CD8-positive, alpha-beta T cell (primary cell): ENCODE measurements at regions of chr2 and their contacts with region 1.

Region 1: GRCh38 chr2:85340034-85340892 is 12.5 kb upstream of the TGOLN2 start:
- DNase-seq: no peak
- ATAC-seq: no peak
- H3K4me3 ChIP-seq: no peak overlapping the region
- H3K4me3 Mint-ChIP-seq: no peak overlapping the region
- H3K27ac ChIP-seq: no peak overlapping the region
- H3K27ac Mint-ChIP-seq: no peak overlapping the region
- H3K4me1 ChIP-seq: no peaks in the 10 kb centered on the region
- H3K4me1 Mint-ChIP-seq: no peaks in the 10 kb centered on the region
- H3K27me3 ChIP-seq: no peaks in the 10 kb centered on the region
- H3K27me3 Mint-ChIP-seq: no peaks in the 10 kb centered on the region
- CTCF ChIP-seq: no peak

Region 2: GRCh38 chr2:85318222-85319074 is 21.8 kb before region 1 on chr2:
- CTCF ChIA-PET with region 1: interaction called, 3 read pairs
- POLR2A ChIA-PET with region 1: interaction called, 4 read pairs
- intact Hi-C with region 1: loop called (anchors 1 kb)
- DNase-seq: peak in 4 of 9 experiments; percentile 27 to 55 (median 40)
- ATAC-seq: peak; percentile 75
- H3K4me3 ChIP-seq: peak overlapping the region in 1 of 2 experiments; percentile 12
- H3K4me3 Mint-ChIP-seq: peak overlapping the region; percentile 63
- H3K27ac ChIP-seq: peak overlapping the region in 1 of 2 experiments; percentile 49
- H3K27ac Mint-ChIP-seq: peak overlapping the region; percentile 93
- H3K4me1 ChIP-seq: peaks cover 54% of the 10 kb centered on the region
- H3K4me1 Mint-ChIP-seq: peaks cover 68% of the 10 kb centered on the region
- H3K27me3 ChIP-seq: no peaks in the 10 kb centered on the region
- H3K27me3 Mint-ChIP-seq: no peaks in the 10 kb centered on the region
- CTCF ChIP-seq: no peak